Activated CD4-positive, alpha-beta T cell treated with anti-CD3 and anti-CD28 coated beads for 36 hours (primary cell): ENCODE measurements at regions of chr2 and their contacts with region 1.

Region 1: GRCh38 chr2:231925303-231926179 is 655 bp downstream of the NPPC start:
- DNase-seq: peak; percentile 85
- ATAC-seq: peak; percentile 54
- H3K4me3 Mint-ChIP-seq: peak overlapping the region; percentile 61
- H3K27ac Mint-ChIP-seq: no peak overlapping the region
- H3K4me1 Mint-ChIP-seq: peaks cover 5% of the 10 kb centered on the region
- H3K27me3 Mint-ChIP-seq: peaks cover 39% of the 10 kb centered on the region

Region 2: DNA sequence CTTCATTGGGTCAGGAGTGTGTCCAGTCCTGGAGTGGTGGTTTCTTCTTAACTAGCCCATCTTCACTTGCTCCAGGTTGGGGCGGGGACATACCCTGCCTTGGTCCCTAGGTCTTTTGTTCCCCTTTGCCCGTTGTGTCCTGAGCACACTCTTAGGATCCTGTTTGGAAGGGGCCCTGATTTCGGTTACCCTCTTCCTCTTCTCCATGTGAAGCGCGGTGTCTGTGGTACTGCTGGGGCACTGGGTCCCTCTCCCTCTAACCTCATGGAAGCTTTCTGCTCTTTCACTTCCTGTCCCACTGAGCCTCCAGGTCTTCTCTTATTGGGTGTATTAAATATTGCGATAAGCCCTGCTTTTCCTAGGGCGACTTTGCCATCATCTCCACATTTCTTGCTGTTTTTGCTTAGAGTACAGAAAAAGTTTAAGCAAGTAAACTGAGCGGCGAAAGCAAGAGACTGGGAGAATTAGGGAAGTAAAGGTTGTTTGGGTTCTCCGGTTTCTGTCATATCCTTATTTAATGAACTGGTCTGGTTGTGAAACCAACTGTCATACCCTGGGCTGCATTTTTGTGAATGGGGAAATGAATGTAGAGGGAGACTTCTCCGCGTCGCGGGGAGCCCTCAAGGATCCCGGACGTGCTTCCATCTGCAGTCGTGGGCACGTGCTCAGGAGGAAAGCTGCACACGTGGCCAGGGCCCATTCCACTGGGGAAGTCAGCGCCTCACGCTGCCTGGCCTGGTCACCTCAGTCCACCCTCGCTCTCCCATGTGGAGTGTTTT is 603.8 kb before region 1 on chr2:
- CTCF ChIA-PET with region 1: no interaction called
- POLR2A ChIA-PET with region 1: no interaction called
- intact Hi-C with region 1: no loop called
- DNase-seq: no peak
- ATAC-seq: no peak
- H3K4me3 Mint-ChIP-seq: no peak overlapping the region
- H3K27ac Mint-ChIP-seq: no peak overlapping the region
- H3K4me1 Mint-ChIP-seq: peaks cover 5% of the 10 kb centered on the region
- H3K27me3 Mint-ChIP-seq: peaks cover 10% of the 10 kb centered on the region

Region 3: DNA sequence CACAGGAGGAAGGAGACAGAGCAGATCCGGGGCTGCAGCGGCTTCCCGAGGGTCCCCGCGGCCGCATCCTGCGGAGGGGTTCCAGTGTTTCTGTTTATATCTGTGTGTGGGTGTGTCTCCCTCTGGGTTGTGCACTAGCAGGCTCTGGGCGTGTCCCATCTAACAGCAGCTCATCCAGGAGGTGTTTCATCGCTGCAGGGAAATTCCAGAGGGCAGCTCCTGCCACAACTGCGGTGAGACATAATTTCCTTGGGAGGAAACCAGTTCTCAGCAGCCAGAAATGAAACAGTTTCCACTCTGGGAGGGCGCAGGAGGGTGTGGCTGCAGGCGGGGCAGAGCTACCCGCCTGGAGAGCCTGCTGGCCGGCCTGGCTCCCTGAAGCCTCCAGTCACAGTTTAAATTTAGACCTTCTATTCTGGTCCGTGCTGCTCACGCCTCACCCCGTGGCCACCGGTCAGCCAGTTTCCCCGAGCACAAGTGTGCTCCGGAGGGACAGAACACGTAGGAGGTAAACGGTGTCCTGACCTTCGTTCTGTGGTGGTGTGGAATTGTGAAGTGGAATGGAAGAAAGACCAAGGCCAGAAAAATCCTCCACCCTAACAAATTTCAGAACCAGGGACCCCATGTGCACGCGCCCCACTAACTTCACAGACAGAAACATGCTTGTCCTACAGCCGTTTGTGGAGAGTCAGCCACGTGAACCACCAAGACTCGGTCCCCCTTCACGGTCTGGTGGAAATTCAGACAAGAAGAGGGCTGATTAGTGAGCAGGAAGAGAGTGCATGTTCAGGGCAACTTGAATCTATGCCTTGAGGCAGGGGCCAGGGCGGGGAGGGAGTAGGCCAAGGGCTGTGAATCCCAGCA is 282.7 kb before region 1 on chr2:
- CTCF ChIA-PET with region 1: no interaction called
- POLR2A ChIA-PET with region 1: no interaction called
- intact Hi-C with region 1: no loop called
- DNase-seq: peak; percentile 85
- ATAC-seq: peak; percentile 93
- H3K4me3 Mint-ChIP-seq: peak overlapping the region; percentile 65
- H3K27ac Mint-ChIP-seq: peak overlapping the region; percentile 88
- H3K4me1 Mint-ChIP-seq: peaks cover 13% of the 10 kb centered on the region
- H3K27me3 Mint-ChIP-seq: no peaks in the 10 kb centered on the region

Region 4: GRCh38 chr2:231900486-231900942 is 25.0 kb before region 1 on chr2:
- CTCF ChIA-PET with region 1: interaction called, 21 read pairs
- POLR2A ChIA-PET with region 1: no interaction called
- intact Hi-C with region 1: no loop called
- DNase-seq: peak; percentile 83
- ATAC-seq: peak; percentile 68
- H3K4me3 Mint-ChIP-seq: no peak overlapping the region
- H3K27ac Mint-ChIP-seq: no peak overlapping the region
- H3K4me1 Mint-ChIP-seq: no peaks in the 10 kb centered on the region
- H3K27me3 Mint-ChIP-seq: no peaks in the 10 kb centered on the region

Region 5: DNA sequence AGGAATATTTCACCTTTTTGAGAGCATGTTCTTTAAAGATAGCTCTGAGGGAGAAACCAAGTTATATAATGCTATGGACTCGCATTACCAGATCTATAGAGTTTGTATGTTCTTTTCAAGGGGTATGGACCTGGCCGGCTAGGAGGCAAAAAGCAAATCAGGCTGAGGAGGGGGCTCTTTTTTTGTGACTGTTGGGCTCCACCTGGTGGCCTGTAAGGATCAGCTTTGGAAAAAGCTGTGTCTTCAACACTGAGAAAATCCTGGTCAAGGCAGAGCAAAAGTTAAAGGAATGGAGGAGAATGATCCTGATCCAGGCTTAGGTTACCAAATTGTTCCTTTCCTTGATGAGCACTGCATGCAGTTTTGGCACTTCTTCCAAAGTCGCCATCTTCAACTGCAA is 216.5 kb after region 1 on chr2:
- CTCF ChIA-PET with region 1: interaction called, 67 read pairs
- POLR2A ChIA-PET with region 1: interaction called, 6 read pairs
- intact Hi-C with region 1: loop called (anchors 1 kb)
- DNase-seq: peak; percentile 61
- ATAC-seq: peak; percentile 57
- H3K4me3 Mint-ChIP-seq: no peak overlapping the region
- H3K27ac Mint-ChIP-seq: no peak overlapping the region
- H3K4me1 Mint-ChIP-seq: peaks cover 37% of the 10 kb centered on the region
- H3K27me3 Mint-ChIP-seq: no peaks in the 10 kb centered on the region

Region 6: GRCh38 chr2:232327105-232328041 is 401.8 kb after region 1 on chr2:
- CTCF ChIA-PET with region 1: interaction called, 11 read pairs
- POLR2A ChIA-PET with region 1: no interaction called
- intact Hi-C with region 1: loop called (anchors 1 kb)
- DNase-seq: peak; percentile 92
- ATAC-seq: peak; percentile 89
- H3K4me3 Mint-ChIP-seq: no peak overlapping the region
- H3K27ac Mint-ChIP-seq: no peak overlapping the region
- H3K4me1 Mint-ChIP-seq: peaks cover 9% of the 10 kb centered on the region
- H3K27me3 Mint-ChIP-seq: no peaks in the 10 kb centered on the region

Region 7: GRCh38 chr2:232521959-232522622 is 596.5 kb after region 1 on chr2:
- CTCF ChIA-PET with region 1: interaction called, 4 read pairs
- POLR2A ChIA-PET with region 1: no interaction called
- intact Hi-C with region 1: loop called in 1 of 2 experiments (anchors 5 kb)
- DNase-seq: peak; percentile 84
- ATAC-seq: peak; percentile 70
- H3K4me3 Mint-ChIP-seq: no peak overlapping the region
- H3K27ac Mint-ChIP-seq: no peak overlapping the region
- H3K4me1 Mint-ChIP-seq: peaks cover 6% of the 10 kb centered on the region
- H3K27me3 Mint-ChIP-seq: peaks cover 25% of the 10 kb centered on the region